ENCODE measurements at regions of chr11 and their contacts with region 1.

Region 1: GRCh38 chr11:119196833-119197483 is 9.2 kb upstream of the CBL start:
- DNase-seq: peak; percentile 93
- H3K4me3 Mint-ChIP-seq: no peak overlapping the region
- H3K27ac Mint-ChIP-seq: no peak overlapping the region
- H3K4me1 Mint-ChIP-seq: peaks cover 6% of the 10 kb centered on the region
- H3K27me3 Mint-ChIP-seq: no peaks in the 10 kb centered on the region
- CTCF ChIP-seq: peak; percentile 80

Region 2: GRCh38 chr11:119067371-119068222 is 129.4 kb before region 1 on chr11 and contains the start of gene VPS11:
- CTCF ChIA-PET with region 1: interaction called, 4 read pairs
- POLR2A ChIA-PET with region 1: interaction called, 3 read pairs
- intact Hi-C with region 1: loop called (anchors 10 kb)
- DNase-seq: peak; percentile 95
- H3K4me3 Mint-ChIP-seq: peak within 1 kb of the TSS; percentile 87
- H3K27ac Mint-ChIP-seq: peak within 1 kb of the TSS; percentile 76
- H3K4me1 Mint-ChIP-seq: peaks cover 7% of the 10 kb centered on the region
- H3K27me3 Mint-ChIP-seq: no peaks in the 10 kb centered on the region
- CTCF ChIP-seq: no peak
- total RNA-seq, gene VPS11: 16.2 and 21.8 TPM in 2 replicates

Region 3: DNA sequence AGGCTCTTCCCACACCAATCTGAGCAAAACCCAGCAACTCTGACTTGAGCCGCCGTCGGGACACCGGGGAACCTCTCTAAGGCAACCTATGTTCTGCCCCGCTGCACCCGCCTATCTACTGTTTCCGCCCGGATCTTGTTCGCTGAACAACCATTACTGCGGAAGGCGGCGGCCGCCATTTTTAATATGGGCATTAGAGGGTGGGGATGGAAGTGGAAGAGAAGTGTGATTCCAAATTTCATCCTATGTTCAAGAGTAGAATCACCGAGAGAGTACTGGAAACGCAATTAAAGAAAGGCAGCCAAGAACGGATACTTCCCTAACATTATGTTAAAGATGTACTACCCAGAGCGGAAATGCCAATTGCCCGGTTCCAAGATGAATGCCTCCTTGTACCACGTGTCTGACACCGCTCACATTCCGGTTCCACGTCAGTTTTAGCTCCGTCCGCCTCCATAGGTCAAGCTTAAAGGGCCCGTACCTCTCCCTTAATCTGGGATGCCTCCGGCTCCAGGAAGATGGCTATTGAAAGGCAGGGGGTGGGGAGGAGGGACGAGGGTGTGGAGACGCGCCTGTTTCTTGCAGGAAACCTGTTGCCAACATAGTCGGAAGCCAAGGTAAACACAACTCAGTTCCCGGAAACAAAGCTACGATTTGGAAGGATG is 95.1 kb before region 1 on chr11 and contains the start of gene DPAGT1:
- CTCF ChIA-PET with region 1: interaction called, 15 read pairs
- POLR2A ChIA-PET with region 1: interaction called, 8 read pairs
- intact Hi-C with region 1: loop called (anchors 1 kb)
- DNase-seq: peak; percentile 99
- H3K4me3 Mint-ChIP-seq: peak within 1 kb of the TSS; percentile 78
- H3K27ac Mint-ChIP-seq: peak within 1 kb of the TSS; percentile 99
- H3K4me1 Mint-ChIP-seq: peaks cover 16% of the 10 kb centered on the region
- H3K27me3 Mint-ChIP-seq: no peaks in the 10 kb centered on the region
- CTCF ChIP-seq: no peak
- total RNA-seq, gene DPAGT1: 55.6 and 58.8 TPM in 2 replicates

Region 4: GRCh38 chr11:119126675-119127268 is 70.2 kb before region 1 on chr11:
- CTCF ChIA-PET with region 1: interaction called, 10 read pairs
- POLR2A ChIA-PET with region 1: no interaction called
- intact Hi-C with region 1: no loop called
- DNase-seq: no peak
- H3K4me3 Mint-ChIP-seq: no peak overlapping the region
- H3K27ac Mint-ChIP-seq: no peak overlapping the region
- H3K4me1 Mint-ChIP-seq: peaks cover 22% of the 10 kb centered on the region
- H3K27me3 Mint-ChIP-seq: no peaks in the 10 kb centered on the region
- CTCF ChIP-seq: no peak

Region 5: DNA sequence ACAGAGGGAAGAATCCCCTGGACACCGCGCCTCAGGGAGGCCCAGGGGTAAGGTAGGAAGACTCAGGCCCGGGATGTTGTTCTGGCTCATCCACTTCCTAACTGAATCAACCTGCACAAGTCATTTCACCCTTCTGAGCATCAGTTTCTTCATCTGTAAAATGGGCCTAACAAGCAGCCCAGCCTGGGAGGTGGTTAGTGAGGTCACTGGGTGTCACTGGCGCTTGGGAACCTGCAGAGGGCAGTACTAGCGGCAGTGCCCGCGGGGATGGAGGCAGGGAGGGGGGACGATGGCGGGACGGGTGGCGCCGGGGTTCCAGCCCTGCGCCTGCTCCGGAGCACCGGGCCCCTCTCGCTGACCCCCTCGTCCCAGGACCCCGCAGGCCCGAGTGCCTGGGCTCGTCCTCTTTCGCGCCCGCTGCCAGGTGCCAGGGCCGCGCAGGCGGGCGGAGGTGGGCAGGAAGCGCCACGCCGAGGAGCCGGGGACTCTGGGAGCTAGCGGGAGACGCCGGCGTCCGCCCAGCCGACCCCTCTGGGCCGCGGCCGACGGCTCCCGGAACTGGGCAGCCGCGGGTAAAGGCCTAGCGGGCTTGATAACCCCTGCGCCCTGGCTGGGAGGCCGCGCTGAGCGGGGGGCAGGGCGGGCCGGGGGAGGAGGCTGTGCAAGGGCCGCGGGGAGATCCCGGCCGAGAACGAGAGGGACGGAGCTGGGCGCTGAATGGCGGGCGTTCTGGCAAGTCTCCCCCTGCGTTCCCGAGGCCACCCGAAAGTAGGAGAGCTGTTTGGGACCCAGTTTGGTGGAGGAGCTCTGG is 28.3 kb before region 1 on chr11 and contains the start of gene NLRX1:
- CTCF ChIA-PET with region 1: interaction called, 43 read pairs
- POLR2A ChIA-PET with region 1: interaction called, 7 read pairs
- intact Hi-C with region 1: loop called (anchors 2 kb)
- DNase-seq: peak; percentile 85
- H3K4me3 Mint-ChIP-seq: peak within 1 kb of the TSS; percentile 82
- H3K27ac Mint-ChIP-seq: peak within 1 kb of the TSS; percentile 54
- H3K4me1 Mint-ChIP-seq: peaks cover 15% of the 10 kb centered on the region
- H3K27me3 Mint-ChIP-seq: no peaks in the 10 kb centered on the region
- CTCF ChIP-seq: peak; percentile 86
- total RNA-seq, gene NLRX1: 16.7 and 18.9 TPM in 2 replicates

Region 6: DNA sequence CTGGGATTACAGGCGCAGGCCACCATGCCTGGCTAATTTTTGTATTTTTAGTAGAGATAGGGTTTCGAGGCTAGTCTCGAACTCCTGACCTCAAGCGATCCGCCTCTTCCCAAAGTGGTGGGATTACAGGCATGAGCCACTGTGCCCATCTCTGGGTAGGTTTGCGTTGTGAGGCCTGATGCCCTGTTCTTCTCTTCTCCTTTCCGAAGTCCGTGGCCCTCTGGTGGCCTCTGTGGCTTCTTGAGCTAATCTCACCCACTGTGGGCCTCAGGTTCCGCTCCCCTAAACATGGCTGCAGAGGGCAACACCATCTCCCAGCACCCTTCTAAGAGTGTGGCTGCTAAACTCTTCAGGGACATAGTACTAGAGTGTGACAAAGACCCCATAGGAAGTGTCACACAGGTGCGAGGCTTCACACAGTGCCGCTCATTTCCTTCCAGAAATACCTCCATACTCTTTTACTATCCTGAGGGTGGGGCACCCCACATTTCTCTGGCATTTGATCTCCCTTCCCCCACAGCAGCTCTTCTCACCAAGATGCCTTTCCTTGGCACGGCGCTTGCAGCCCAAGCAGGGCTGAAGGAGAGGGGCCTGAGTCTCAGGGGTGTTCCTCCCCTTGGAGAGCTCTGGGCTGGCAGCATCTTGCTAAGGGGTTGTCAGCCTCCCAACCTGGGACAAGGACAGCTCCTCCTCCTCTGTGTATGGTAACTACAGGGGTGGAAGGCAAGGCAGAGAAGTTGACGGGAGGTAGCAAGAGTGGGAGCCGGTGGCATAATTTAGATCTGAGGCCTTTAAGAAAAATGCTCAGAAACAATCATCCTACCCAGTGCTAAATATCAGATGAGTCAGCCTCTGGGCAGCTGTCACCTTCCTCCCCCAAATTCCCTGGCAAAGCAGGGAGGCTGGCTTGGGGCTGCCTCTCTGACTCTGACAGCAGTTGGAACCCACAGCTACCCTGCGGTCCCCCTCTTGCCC is 219.9 kb after region 1 on chr11:
- CTCF ChIA-PET with region 1: no interaction called
- POLR2A ChIA-PET with region 1: no interaction called
- intact Hi-C with region 1: no loop called
- DNase-seq: peak; percentile 67
- H3K4me3 Mint-ChIP-seq: peak overlapping the region; percentile 66
- H3K27ac Mint-ChIP-seq: peak overlapping the region; percentile 93
- H3K4me1 Mint-ChIP-seq: peaks cover 23% of the 10 kb centered on the region
- H3K27me3 Mint-ChIP-seq: peaks cover 4% of the 10 kb centered on the region
- CTCF ChIP-seq: no peak